ENCODE measurements at regions of chr9 and their contacts with region 1.

Region 1: GRCh38 chr9:32526041-32526706 is at the start of gene RIGI:
- DNase-seq: peak; percentile 82
- ATAC-seq: peak; percentile 78
- H3K4me3 ChIP-seq: peak within 1 kb of the TSS; percentile 73 to 98 (median 84)
- H3K4me3 Mint-ChIP-seq: peak within 1 kb of the TSS; percentile 95
- H3K27ac ChIP-seq: peak within 1 kb of the TSS; percentile 73 to 74
- H3K27ac Mint-ChIP-seq: peak within 1 kb of the TSS; percentile 93
- H3K4me1 ChIP-seq: peaks cover 27 to 31% of the 10 kb centered on the region in 2 donors
- H3K4me1 Mint-ChIP-seq: peaks cover 54% of the 10 kb centered on the region
- H3K27me3 ChIP-seq: no peaks in the 10 kb centered on the region
- H3K27me3 Mint-ChIP-seq: no peaks in the 10 kb centered on the region
- CTCF ChIP-seq: peak; percentile 59
- total RNA-seq, gene RIGI: 24.9 and 26.3 TPM in 2 replicates

Region 2: GRCh38 chr9:32322622-32323021 is 203.6 kb before region 1 on chr9:
- CTCF ChIA-PET with region 1: no interaction called
- POLR2A ChIA-PET with region 1: no interaction called
- intact Hi-C with region 1: no loop called
- DNase-seq: no peak
- ATAC-seq: no peak
- H3K4me3 ChIP-seq: no peak overlapping the region
- H3K4me3 Mint-ChIP-seq: no peak overlapping the region
- H3K27ac ChIP-seq: no peak overlapping the region
- H3K27ac Mint-ChIP-seq: no peak overlapping the region
- H3K4me1 ChIP-seq: no peaks in the 10 kb centered on the region
- H3K4me1 Mint-ChIP-seq: no peaks in the 10 kb centered on the region
- H3K27me3 ChIP-seq: no peaks in the 10 kb centered on the region
- H3K27me3 Mint-ChIP-seq: peaks cover 14% of the 10 kb centered on the region
- CTCF ChIP-seq: no peak

Region 3: DNA sequence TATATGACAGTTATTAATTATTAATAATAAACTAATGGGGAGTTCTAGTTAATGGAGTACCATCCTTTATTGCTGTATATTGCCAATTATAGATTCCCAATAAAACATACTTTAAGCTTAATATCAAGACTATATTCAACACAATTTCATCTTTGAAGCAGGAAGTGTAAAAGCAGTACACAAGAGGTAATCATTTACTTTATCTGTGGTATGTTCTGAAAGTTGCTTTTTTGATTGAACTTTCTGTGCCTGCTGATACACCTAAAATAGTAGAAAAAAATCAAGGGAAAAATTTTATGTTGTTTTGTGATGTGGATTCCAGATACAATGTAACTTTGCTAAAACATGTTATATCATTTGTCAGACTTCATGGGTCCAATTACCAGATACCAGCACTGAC is 83.7 kb before region 1 on chr9:
- CTCF ChIA-PET with region 1: no interaction called
- POLR2A ChIA-PET with region 1: no interaction called
- intact Hi-C with region 1: no loop called
- DNase-seq: no peak
- ATAC-seq: no peak
- H3K4me3 ChIP-seq: no peak overlapping the region
- H3K4me3 Mint-ChIP-seq: no peak overlapping the region
- H3K27ac ChIP-seq: no peak overlapping the region
- H3K27ac Mint-ChIP-seq: no peak overlapping the region
- H3K4me1 ChIP-seq: no peaks in the 10 kb centered on the region
- H3K4me1 Mint-ChIP-seq: no peaks in the 10 kb centered on the region
- H3K27me3 ChIP-seq: no peaks in the 10 kb centered on the region
- H3K27me3 Mint-ChIP-seq: no peaks in the 10 kb centered on the region
- CTCF ChIP-seq: no peak

Region 4: DNA sequence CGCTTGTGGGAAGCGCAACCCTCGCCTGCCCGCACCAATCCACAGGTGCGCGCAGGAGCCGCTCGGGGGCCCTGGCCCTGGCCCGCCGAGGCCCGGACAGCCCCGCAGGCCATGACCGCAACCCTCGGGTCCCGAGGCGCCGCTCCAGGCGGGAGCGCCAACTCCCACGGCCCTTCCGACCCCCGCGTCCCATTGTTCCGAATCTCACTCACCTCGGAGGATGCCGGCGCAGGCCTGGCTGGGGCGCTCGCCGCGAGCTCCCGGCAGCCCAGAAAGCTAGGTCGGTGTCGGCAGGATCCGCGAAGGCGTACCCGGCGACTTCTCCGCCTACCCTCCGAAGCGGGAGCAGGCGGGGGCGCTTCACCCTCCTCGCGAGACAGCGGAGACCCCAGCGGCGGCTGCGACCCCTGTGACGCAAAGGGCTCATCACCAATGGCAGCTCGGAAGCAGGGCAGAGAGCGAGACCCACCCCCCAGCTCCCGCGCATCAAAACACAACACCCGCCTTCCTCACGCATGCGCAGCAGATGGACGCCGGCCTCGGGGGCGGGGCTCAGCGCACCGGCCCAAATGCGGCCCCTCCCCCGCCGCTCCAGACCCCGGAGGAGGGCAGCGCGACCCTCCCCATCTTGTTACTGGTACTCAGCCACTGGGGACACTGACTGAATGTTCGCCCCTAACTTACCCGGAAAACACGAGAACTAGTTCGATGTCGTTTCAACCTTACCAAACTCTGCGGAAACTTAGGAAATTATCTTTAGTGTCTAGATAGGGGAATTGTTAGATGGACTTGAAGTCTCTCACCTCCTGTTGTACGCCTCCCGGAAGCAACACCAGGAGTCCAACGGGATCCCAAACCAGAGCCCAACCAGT is 24.6 kb after region 1 on chr9:
- CTCF ChIA-PET with region 1: interaction called, 17 read pairs
- POLR2A ChIA-PET with region 1: interaction called, 16 read pairs
- intact Hi-C with region 1: loop called (anchors 1 kb)
- DNase-seq: peak; percentile 97
- ATAC-seq: peak; percentile 84
- H3K4me3 ChIP-seq: peak overlapping the region; percentile 86 to 98 (median 87)
- H3K4me3 Mint-ChIP-seq: peak overlapping the region; percentile 91
- H3K27ac ChIP-seq: peak overlapping the region; percentile 89 to 92
- H3K27ac Mint-ChIP-seq: peak overlapping the region; percentile 91
- H3K4me1 ChIP-seq: peaks cover 14 to 15% of the 10 kb centered on the region in 2 donors
- H3K4me1 Mint-ChIP-seq: peaks cover 34% of the 10 kb centered on the region
- H3K27me3 ChIP-seq: no peaks in the 10 kb centered on the region
- H3K27me3 Mint-ChIP-seq: no peaks in the 10 kb centered on the region
- CTCF ChIP-seq: peak; percentile 5

Measured in B cell (primary cell).